PC-9 (cell line): ENCODE measurements at regions of chr1 and their contacts with region 1.

Region 1: GRCh38 chr1:89598450-89599331 is 34.2 kb upstream of the LRRC8C start:
- DNase-seq: no peak
- H3K4me3 ChIP-seq: no peak overlapping the region
- H3K27ac ChIP-seq: no peak overlapping the region
- H3K4me1 ChIP-seq: no peaks in the 10 kb centered on the region
- H3K27me3 ChIP-seq: no peaks in the 10 kb centered on the region
- CTCF ChIP-seq: peak; percentile 81

Region 2: GRCh38 chr1:89483010-89483756 is 115.5 kb before region 1 on chr1:
- CTCF ChIA-PET with region 1: interaction called, 5 read pairs
- POLR2A ChIA-PET with region 1: no interaction called
- intact Hi-C with region 1: loop called (anchors 1 kb)
- DNase-seq: peak; percentile 43 to 72
- H3K4me3 ChIP-seq: no peak overlapping the region
- H3K27ac ChIP-seq: no peak overlapping the region
- H3K4me1 ChIP-seq: no peaks in the 10 kb centered on the region
- H3K27me3 ChIP-seq: no peaks in the 10 kb centered on the region
- CTCF ChIP-seq: peak; percentile 94

Region 3: GRCh38 chr1:89566761-89567174 is 31.9 kb before region 1 on chr1:
- CTCF ChIA-PET with region 1: no interaction called
- POLR2A ChIA-PET with region 1: no interaction called
- intact Hi-C with region 1: no loop called
- DNase-seq: no peak
- H3K4me3 ChIP-seq: no peak overlapping the region
- H3K27ac ChIP-seq: no peak overlapping the region
- H3K4me1 ChIP-seq: no peaks in the 10 kb centered on the region
- H3K27me3 ChIP-seq: no peaks in the 10 kb centered on the region
- CTCF ChIP-seq: no peak